Tibial artery (tissue), 4 donors: ENCODE measurements at regions of chr5 and their contacts with region 1.

Region 1: DNA sequence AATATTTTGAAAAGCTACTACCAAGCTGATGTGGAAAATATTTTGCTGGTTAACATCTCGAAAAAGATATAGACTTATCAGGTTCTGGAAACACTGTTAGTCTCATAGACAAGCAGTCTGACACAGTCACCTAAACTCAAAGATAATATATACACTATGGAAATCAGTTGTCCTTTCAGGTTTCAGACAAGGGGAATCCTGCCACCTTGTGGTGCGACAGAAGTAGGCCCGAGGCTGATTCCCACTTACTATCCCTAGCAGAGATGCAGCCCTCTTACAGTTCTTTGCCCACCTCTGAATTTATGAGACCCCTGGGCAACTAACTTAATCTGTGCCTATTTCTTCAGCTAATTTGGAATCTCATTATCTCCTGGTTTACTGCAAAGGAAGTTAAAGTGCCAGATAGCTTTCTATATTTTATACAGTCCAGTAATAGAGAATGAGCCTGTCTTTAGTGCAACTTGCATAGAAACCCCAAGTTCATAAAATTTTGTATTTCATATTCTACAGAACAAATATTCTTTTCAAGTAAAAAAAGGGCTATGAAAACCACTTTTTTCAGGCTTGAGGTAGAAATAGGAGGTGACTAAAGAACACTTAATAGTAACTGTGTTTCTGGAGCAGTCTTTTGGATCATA is 16.9 kb downstream of the RAD1 start:
- DNase-seq: peak; percentile 45 to 73
- H3K4me3 ChIP-seq: no peak overlapping the region
- H3K27ac ChIP-seq: no peak overlapping the region
- H3K4me1 ChIP-seq: no peaks in the 10 kb centered on the region
- H3K27me3 ChIP-seq: no peaks in the 10 kb centered on the region
- CTCF ChIP-seq: peak; percentile 86 to 87

Region 2: DNA sequence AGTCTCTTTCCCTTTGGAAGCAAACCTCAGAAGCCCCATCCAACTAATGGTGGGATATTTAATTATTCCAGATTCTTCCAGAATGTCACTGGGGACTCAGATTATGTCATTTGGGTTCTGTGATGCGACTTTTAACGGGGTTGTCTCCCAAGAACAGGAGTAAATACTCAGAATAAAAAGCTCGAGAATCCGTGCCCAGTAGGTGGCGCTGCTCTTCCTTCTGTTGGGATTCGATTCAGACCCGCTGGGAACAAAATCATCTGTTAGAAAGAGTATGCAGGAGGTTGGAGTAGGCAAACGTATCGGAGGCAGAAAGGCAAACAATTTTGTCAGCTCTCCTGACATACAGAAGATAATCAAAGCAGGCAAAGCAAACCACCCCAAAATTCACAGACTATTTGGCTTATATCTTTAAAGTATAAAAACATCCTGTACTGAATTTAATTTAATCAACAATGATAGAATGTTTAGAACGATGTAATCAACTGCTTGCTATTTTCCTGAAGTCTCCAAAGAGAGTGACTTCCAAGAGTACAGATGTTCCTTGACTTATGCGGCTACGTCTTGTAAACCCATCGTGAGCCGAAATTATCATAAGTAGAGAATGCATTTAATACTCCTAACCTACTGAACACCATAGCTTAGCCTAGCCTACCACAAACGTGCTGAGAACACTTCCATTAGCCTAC is 412.1 kb before region 1 on chr5:
- intact Hi-C with region 1: loop called (anchors 5 kb)
- DNase-seq: peak; percentile 81 to 89
- H3K4me3 ChIP-seq: no peak overlapping the region
- H3K27ac ChIP-seq: peak overlapping the region; percentile 65
- H3K4me1 ChIP-seq: peaks cover 0 to 49% (median 27%) of the 10 kb centered on the region in 4 donors
- H3K27me3 ChIP-seq: no peaks in the 10 kb centered on the region
- CTCF ChIP-seq: peak; percentile 75 to 83

Region 3: GRCh38 chr5:34522599-34523386 is 375.6 kb before region 1 on chr5:
- intact Hi-C with region 1: loop called (anchors 2 kb)
- DNase-seq: peak; percentile 77 to 82
- H3K4me3 ChIP-seq: no peak overlapping the region
- H3K27ac ChIP-seq: peak overlapping the region in 1 of 2 donors; percentile 68
- H3K4me1 ChIP-seq: peaks cover 0 to 67% (median 12%) of the 10 kb centered on the region in 4 donors
- H3K27me3 ChIP-seq: no peaks in the 10 kb centered on the region
- CTCF ChIP-seq: peak; percentile 69 to 81

Region 4: GRCh38 chr5:34656001-34656699 is 242.2 kb before region 1 on chr5 and contains the start of gene RAI14:
- intact Hi-C with region 1: loop called (anchors 5 kb)
- DNase-seq: peak; percentile 77 to 90
- H3K4me3 ChIP-seq: peak within 1 kb of the TSS; percentile 82 to 99
- H3K27ac ChIP-seq: peak within 1 kb of the TSS; percentile 96
- H3K4me1 ChIP-seq: peaks cover 0 to 42% (median 17%) of the 10 kb centered on the region in 4 donors
- H3K27me3 ChIP-seq: no peaks in the 10 kb centered on the region
- CTCF ChIP-seq: no peak

Region 5: GRCh38 chr5:34854459-34855174 is 43.8 kb before region 1 on chr5:
- intact Hi-C with region 1: no loop called
- DNase-seq: no peak
- H3K4me3 ChIP-seq: no peak overlapping the region
- H3K27ac ChIP-seq: no peak overlapping the region
- H3K4me1 ChIP-seq: peaks cover 0 to 29% (median 9%) of the 10 kb centered on the region in 4 donors
- H3K27me3 ChIP-seq: no peaks in the 10 kb centered on the region
- CTCF ChIP-seq: no peak